HEK293 (cell line): ENCODE measurements at regions of chr19 and their contacts with region 1.

Region 1: GRCh38 chr19:11380653-11381534 is 3.2 kb downstream of the EPOR start:
- H3K4me3 ChIP-seq: peak overlapping the region; percentile 55
- H3K27ac ChIP-seq: peak overlapping the region; percentile 59; the same call in 1 of the 2 replicates
- H3K4me1 ChIP-seq: no peaks in the 10 kb centered on the region; the same call in 1 of the 2 replicates
- CTCF ChIP-seq: peak; percentile 97

Region 2: GRCh38 chr19:11293433-11294389 is 87.2 kb before region 1 on chr19:
- CTCF ChIA-PET with region 1: interaction called, 44 read pairs
- POLR2A ChIA-PET with region 1: interaction called, 11 read pairs
- H3K4me3 ChIP-seq: no peak overlapping the region
- H3K27ac ChIP-seq: no peak overlapping the region
- H3K4me1 ChIP-seq: no peaks in the 10 kb centered on the region; the same call in 1 of the 2 replicates
- CTCF ChIP-seq: peak; percentile 93

Region 3: DNA sequence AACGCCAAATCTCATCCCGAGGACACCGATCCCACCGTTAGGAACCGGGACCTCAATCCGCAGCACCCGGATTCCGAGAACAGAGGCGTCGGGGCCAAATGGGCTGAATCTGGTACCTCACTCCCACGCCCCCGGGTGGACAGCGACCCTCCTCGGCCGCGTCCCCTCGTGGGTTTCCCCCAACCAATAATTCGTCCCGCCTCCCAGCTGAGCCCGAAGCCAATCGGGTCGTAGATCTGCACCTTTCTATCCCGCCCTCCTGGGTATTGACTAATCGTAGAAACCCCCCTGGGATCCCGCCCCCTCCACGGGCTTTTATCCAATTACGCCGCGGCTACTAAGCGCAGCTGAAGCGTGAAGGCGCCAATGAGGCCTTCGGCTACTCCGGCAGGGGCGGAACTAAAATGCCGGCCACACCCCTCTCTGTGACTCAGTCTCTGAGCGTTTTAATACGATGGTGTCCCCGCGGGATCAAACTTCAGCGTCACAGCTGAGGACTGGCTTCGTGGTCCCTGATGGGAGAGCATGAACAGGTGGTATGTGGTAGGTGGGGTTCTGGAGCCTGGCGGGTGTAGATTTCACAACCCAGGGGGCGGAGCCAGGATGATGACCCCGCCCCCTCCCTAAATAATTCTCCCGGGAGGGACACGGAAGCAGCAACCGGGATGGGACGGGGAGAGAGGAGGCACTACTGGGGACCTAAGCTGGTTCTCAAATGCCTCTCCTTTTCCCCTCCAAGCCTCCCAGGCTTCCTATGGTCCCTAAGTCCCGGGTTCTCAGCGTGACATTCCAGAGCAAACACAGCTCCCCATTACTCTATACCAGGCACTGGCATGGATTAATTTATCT is 34.6 kb before region 1 on chr19 and contains the starts of genes CCDC159 and TMEM205:
- CTCF ChIA-PET with region 1: interaction called, 19 read pairs
- POLR2A ChIA-PET with region 1: interaction called, 36 read pairs
- H3K4me3 ChIP-seq: peak within 1 kb of the TSS; percentile 72
- H3K27ac ChIP-seq: peak within 1 kb of the TSS; percentile 55; the same call in 1 of the 2 replicates
- H3K4me1 ChIP-seq: no peaks in the 10 kb centered on the region
- CTCF ChIP-seq: peak; percentile 88

Region 4: DNA sequence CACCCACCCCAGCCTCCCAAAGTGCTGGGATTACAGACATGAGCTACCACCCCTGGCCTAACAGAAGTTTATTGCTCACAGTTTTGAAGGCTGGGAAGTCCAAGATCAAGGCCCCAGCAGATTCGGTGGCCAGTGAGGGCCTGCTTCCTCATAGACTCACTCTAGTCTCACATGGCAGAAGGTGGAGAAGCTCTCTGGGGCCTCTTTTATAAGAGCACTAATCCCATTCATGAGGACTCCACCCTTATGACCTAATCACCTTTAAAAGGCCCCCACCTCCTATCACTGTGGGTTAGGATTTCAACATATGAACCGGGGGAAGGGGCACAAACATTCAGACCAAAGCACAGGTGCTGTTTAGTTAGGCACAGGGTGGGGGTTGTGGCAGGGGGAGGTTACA is 13.4 kb before region 1 on chr19:
- CTCF ChIA-PET with region 1: interaction called, 12 read pairs
- POLR2A ChIA-PET with region 1: interaction called, 3 read pairs
- H3K4me3 ChIP-seq: no peak overlapping the region
- H3K27ac ChIP-seq: no peak overlapping the region
- H3K4me1 ChIP-seq: no peaks in the 10 kb centered on the region
- CTCF ChIP-seq: no peak

Region 5: DNA sequence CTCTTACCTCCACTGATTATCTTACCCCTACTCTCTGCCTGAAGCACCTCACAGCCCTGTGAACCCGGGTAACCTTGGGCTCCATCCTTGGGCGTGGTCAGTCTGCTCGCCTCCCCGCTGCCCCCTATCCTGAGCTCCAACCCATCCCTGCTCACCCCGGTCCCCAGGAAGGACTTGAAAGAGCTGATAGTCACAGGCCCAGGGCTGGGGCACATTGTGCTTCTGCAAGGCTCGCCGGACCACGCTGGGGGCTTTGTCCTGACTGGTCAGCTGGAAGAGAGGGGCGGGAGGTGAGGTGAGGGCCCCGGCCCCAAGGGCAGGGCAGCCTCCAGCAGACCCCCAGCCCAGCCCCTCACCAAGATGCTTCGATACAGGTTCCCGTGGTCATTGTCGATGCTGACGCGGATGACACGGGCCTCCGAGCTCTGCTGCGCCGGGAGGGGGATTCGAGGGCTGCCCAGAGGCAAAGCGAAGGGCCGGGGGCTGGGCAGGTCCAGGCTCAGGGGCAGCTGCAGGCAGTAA is 16.3 kb after region 1 on chr19:
- CTCF ChIA-PET with region 1: interaction called, 15 read pairs
- POLR2A ChIA-PET with region 1: interaction called, 8 read pairs
- H3K4me3 ChIP-seq: no peak overlapping the region
- H3K27ac ChIP-seq: no peak overlapping the region
- H3K4me1 ChIP-seq: no peaks in the 10 kb centered on the region
- CTCF ChIP-seq: no peak

Region 6: GRCh38 chr19:11418549-11419506 is 37.9 kb after region 1 on chr19 and contains the start of gene RGL3:
- CTCF ChIA-PET with region 1: interaction called, 66 read pairs
- POLR2A ChIA-PET with region 1: interaction called, 6 read pairs
- H3K4me3 ChIP-seq: peak within 1 kb of the TSS; percentile 36
- H3K27ac ChIP-seq: no peak within 1 kb of the TSS
- H3K4me1 ChIP-seq: no peaks in the 10 kb centered on the region
- CTCF ChIP-seq: no peak

Region 7: GRCh38 chr19:11446652-11447301 is 65.9 kb after region 1 on chr19:
- CTCF ChIA-PET with region 1: interaction called, 36 read pairs
- POLR2A ChIA-PET with region 1: interaction called, 14 read pairs
- H3K4me3 ChIP-seq: no peak overlapping the region
- H3K27ac ChIP-seq: no peak overlapping the region
- H3K4me1 ChIP-seq: no peaks in the 10 kb centered on the region
- CTCF ChIP-seq: peak; percentile 88